CD4-positive, alpha-beta T cell (primary cell): ENCODE measurements at regions of chr5 and their contacts with region 1.

Region 1: DNA sequence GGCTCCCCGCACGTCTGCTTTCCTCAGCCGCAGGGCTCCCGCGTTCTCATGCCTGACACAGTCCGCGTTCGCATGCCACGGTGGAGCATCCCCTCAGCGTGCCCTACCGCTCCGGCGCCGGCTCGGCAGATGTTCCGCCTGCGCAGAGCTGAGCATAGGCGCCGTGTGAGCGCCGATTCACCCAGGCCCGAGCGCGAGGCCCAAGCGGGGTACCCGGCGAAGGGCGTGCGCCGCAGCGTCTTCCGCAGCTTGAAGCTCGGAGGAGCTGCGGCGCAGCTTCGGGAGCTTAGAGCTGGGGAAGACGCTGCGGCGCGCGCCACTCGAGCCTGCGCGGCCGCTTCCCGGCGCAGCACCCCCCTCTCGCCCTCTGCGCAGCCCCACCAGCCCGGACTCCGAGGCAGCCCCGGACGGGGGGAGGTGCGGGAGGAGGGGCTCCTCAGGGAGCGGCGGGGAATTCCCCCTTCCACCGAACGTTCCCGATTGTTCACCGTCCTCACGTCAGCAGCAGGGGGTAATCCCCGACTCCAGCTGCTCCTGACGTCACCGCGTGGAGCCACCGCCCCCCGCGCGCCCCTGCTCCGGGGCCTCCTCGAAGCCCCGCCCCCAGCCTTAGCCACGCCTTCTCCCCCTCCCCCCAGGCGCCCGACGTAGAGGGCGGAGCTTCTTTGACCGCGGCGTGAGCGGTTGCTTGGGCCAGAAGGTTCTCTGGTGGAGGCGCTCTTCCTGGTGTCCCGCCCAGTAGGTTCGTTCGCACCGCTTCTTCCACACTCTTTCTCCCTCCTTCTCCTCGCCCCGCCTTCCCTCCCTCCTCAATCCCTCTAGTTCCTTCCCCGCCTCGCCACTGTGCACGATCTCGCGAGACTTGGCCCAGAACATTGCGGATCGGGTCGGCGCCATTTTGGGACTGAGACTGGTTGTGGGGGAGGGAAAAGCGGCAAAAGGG is at the start of gene GPBP1:
- DNase-seq: peak; percentile 94 to 100 (median 97)
- ATAC-seq: peak; percentile 70
- H3K4me3 ChIP-seq: peak within 1 kb of the TSS; percentile 91
- H3K4me3 Mint-ChIP-seq: peak within 1 kb of the TSS; percentile 98
- H3K27ac ChIP-seq: peak within 1 kb of the TSS; percentile 100
- H3K27ac Mint-ChIP-seq: peak within 1 kb of the TSS; percentile 96
- H3K4me1 ChIP-seq: peaks cover 19% of the 10 kb centered on the region
- H3K4me1 Mint-ChIP-seq: peaks cover 41% of the 10 kb centered on the region
- H3K27me3 ChIP-seq: no peaks in the 10 kb centered on the region
- H3K27me3 Mint-ChIP-seq: no peaks in the 10 kb centered on the region
- CTCF ChIP-seq: no peak
- total RNA-seq, gene GPBP1: 136 to 137 TPM

Region 2: GRCh38 chr5:55534436-55535198 is 1638.8 kb before region 1 on chr5 and contains the start of gene PLPP1:
- CTCF ChIA-PET with region 1: no interaction called
- POLR2A ChIA-PET with region 1: interaction called, 3 read pairs
- intact Hi-C with region 1: loop called in 1 of 2 experiments (anchors 10 kb)
- DNase-seq: peak; percentile 65 to 93 (median 78)
- ATAC-seq: peak; percentile 82
- H3K4me3 ChIP-seq: peak within 1 kb of the TSS; percentile 74
- H3K4me3 Mint-ChIP-seq: peak within 1 kb of the TSS; percentile 85
- H3K27ac ChIP-seq: peak within 1 kb of the TSS; percentile 60 to 85
- H3K27ac Mint-ChIP-seq: peak within 1 kb of the TSS; percentile 83
- H3K4me1 ChIP-seq: peaks cover 25% of the 10 kb centered on the region
- H3K4me1 Mint-ChIP-seq: peaks cover 48% of the 10 kb centered on the region
- H3K27me3 ChIP-seq: no peaks in the 10 kb centered on the region
- H3K27me3 Mint-ChIP-seq: no peaks in the 10 kb centered on the region
- CTCF ChIP-seq: no peak
- total RNA-seq, gene PLPP1: 2.9 to 3.0 TPM

Region 3: GRCh38 chr5:56909294-56910209 is 263.9 kb before region 1 on chr5 and contains the start of gene SETD9:
- CTCF ChIA-PET with region 1: no interaction called
- POLR2A ChIA-PET with region 1: interaction called, 18 read pairs
- intact Hi-C with region 1: loop called in 1 of 2 experiments (anchors 2 kb)
- DNase-seq: peak; percentile 65 to 95 (median 80)
- ATAC-seq: peak; percentile 84
- H3K4me3 ChIP-seq: peak within 1 kb of the TSS; percentile 88
- H3K4me3 Mint-ChIP-seq: peak within 1 kb of the TSS; percentile 95
- H3K27ac ChIP-seq: peak within 1 kb of the TSS; percentile 57 to 82
- H3K27ac Mint-ChIP-seq: peak within 1 kb of the TSS; percentile 81
- H3K4me1 ChIP-seq: peaks cover 15% of the 10 kb centered on the region
- H3K4me1 Mint-ChIP-seq: peaks cover 24% of the 10 kb centered on the region
- H3K27me3 ChIP-seq: no peaks in the 10 kb centered on the region
- H3K27me3 Mint-ChIP-seq: no peaks in the 10 kb centered on the region
- CTCF ChIP-seq: no peak
- total RNA-seq, gene SETD9: 1.6 to 2.3 TPM

Region 4: DNA sequence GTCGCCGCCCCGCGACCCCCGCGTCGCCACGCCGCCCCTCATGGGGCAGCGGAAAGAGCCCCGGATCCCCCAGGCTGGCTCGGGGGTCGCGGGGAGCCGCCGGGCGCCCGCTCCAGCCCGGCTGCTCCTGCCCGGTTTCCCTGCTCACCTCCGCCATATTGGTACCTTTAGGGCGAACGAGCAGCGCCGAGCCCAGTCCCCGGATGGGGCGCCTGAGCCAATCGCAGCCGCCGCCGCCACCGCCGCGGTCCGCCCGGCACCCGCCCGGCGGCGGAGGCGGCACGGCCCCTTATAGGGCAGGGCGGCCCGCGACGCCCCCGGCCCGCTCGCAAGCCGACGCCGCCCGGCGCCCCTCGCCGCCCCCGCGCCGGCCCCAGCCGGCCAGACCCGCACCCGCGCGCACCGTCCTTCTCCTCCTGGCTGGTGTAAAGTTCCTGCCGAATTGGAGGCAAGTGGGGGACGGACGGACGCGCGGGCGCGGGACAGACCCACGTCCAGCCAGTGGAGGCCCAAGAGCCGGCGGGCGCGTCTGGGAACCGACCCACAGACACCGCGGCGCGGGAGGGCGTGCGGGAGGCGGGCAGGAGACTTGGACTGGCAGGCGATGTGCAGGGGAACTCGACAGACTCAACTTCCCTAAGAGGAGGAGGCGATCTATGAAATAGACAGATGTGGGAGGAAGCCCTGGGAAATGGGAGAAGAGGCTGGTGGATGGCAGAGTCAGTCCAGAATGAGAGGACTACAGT is 221.3 kb before region 1 on chr5 and contains the start of gene MIER3:
- CTCF ChIA-PET with region 1: no interaction called
- POLR2A ChIA-PET with region 1: interaction called, 12 read pairs
- intact Hi-C with region 1: loop called in 1 of 2 experiments (anchors 5 kb)
- DNase-seq: peak; percentile 61 to 89 (median 73)
- ATAC-seq: peak; percentile 92
- H3K4me3 ChIP-seq: peak within 1 kb of the TSS; percentile 78
- H3K4me3 Mint-ChIP-seq: peak within 1 kb of the TSS; percentile 89
- H3K27ac ChIP-seq: no peak within 1 kb of the TSS
- H3K27ac Mint-ChIP-seq: peak within 1 kb of the TSS; percentile 88
- H3K4me1 ChIP-seq: peaks cover 17% of the 10 kb centered on the region
- H3K4me1 Mint-ChIP-seq: peaks cover 20% of the 10 kb centered on the region
- H3K27me3 ChIP-seq: peaks cover 7 to 14% of the 10 kb centered on the region in 2 experiments
- H3K27me3 Mint-ChIP-seq: peaks cover 21% of the 10 kb centered on the region
- CTCF ChIP-seq: no peak
- total RNA-seq, gene MIER3: 25.9 to 26.1 TPM

Region 5: GRCh38 chr5:57137401-57137800 is 36.1 kb before region 1 on chr5:
- CTCF ChIA-PET with region 1: interaction called, 7 read pairs
- POLR2A ChIA-PET with region 1: interaction called, 3 read pairs
- intact Hi-C with region 1: loop called in 1 of 2 experiments (anchors 5 kb)
- DNase-seq: no peak
- ATAC-seq: no peak
- H3K4me3 ChIP-seq: no peak overlapping the region
- H3K4me3 Mint-ChIP-seq: no peak overlapping the region
- H3K27ac ChIP-seq: no peak overlapping the region
- H3K27ac Mint-ChIP-seq: no peak overlapping the region
- H3K4me1 ChIP-seq: no peaks in the 10 kb centered on the region
- H3K4me1 Mint-ChIP-seq: no peaks in the 10 kb centered on the region
- H3K27me3 ChIP-seq: peaks cover 0 to 2% of the 10 kb centered on the region in 2 experiments
- H3K27me3 Mint-ChIP-seq: peaks cover 3% of the 10 kb centered on the region
- CTCF ChIP-seq: no peak

Region 6: DNA sequence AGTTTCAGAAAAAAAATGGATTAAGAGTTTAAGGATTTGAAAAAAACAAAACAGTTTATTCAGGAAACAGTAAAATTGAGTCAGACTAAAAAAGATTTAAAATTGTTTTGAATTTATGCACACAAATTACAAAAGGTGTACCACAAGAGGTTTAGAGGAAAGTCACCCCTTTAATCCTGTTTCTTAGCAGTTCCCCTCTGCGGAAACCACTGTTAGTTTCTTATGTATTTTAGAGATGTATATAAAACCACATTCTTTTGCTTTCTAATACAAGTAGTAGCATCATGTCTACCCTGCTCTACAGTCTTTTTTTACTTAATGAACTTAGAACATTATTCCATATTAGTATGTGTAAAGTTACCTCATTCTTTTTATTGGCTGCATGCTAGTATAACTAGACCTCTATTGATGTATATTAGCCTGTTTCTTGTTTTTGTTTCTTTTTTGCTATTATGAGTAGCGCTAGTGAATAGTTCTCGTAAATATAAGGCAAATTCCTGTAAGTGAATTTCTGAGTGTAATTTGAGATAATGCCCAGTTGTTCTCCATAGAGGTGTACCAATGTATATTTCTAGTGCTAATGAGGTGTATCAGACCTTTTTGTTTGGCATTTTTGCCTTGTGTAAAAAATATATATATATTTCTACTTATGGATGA is 20.4 kb after region 1 on chr5:
- CTCF ChIA-PET with region 1: no interaction called
- POLR2A ChIA-PET with region 1: interaction called, 15 read pairs
- intact Hi-C with region 1: loop called (anchors 2 kb)
- DNase-seq: peak in 2 of 14 experiments; percentile 43 to 46
- ATAC-seq: peak; percentile 63
- H3K4me3 ChIP-seq: no peak overlapping the region
- H3K4me3 Mint-ChIP-seq: peak overlapping the region; percentile 65
- H3K27ac ChIP-seq: no peak overlapping the region
- H3K27ac Mint-ChIP-seq: peak overlapping the region; percentile 77
- H3K4me1 ChIP-seq: peaks cover 54% of the 10 kb centered on the region
- H3K4me1 Mint-ChIP-seq: peaks cover 75% of the 10 kb centered on the region
- H3K27me3 ChIP-seq: no peaks in the 10 kb centered on the region
- H3K27me3 Mint-ChIP-seq: no peaks in the 10 kb centered on the region
- CTCF ChIP-seq: no peak

Region 7: GRCh38 chr5:57221049-57221568 is 47.7 kb after region 1 on chr5:
- CTCF ChIA-PET with region 1: interaction called, 5 read pairs
- POLR2A ChIA-PET with region 1: interaction called, 9 read pairs
- intact Hi-C with region 1: loop called (anchors 1 to 2 kb)
- DNase-seq: peak in 5 of 14 experiments; percentile 9 to 86 (median 78)
- ATAC-seq: peak; percentile 85
- H3K4me3 ChIP-seq: no peak overlapping the region
- H3K4me3 Mint-ChIP-seq: no peak overlapping the region
- H3K27ac ChIP-seq: no peak overlapping the region
- H3K27ac Mint-ChIP-seq: peak overlapping the region; percentile 59
- H3K4me1 ChIP-seq: peaks cover 14% of the 10 kb centered on the region
- H3K4me1 Mint-ChIP-seq: peaks cover 68% of the 10 kb centered on the region
- H3K27me3 ChIP-seq: no peaks in the 10 kb centered on the region
- H3K27me3 Mint-ChIP-seq: no peaks in the 10 kb centered on the region
- CTCF ChIP-seq: peak; percentile 95

Region 8: GRCh38 chr5:57276353-57276752 is 102.9 kb after region 1 on chr5:
- CTCF ChIA-PET with region 1: no interaction called
- POLR2A ChIA-PET with region 1: no interaction called
- intact Hi-C with region 1: no loop called
- DNase-seq: peak in 1 of 14 experiments; percentile 18
- ATAC-seq: no peak
- H3K4me3 ChIP-seq: no peak overlapping the region
- H3K4me3 Mint-ChIP-seq: no peak overlapping the region
- H3K27ac ChIP-seq: no peak overlapping the region
- H3K27ac Mint-ChIP-seq: no peak overlapping the region
- H3K4me1 ChIP-seq: no peaks in the 10 kb centered on the region
- H3K4me1 Mint-ChIP-seq: no peaks in the 10 kb centered on the region
- H3K27me3 ChIP-seq: no peaks in the 10 kb centered on the region
- H3K27me3 Mint-ChIP-seq: peaks cover 7% of the 10 kb centered on the region
- CTCF ChIP-seq: no peak